PC-9 (cell line): ENCODE measurements at regions of chr18 and their contacts with region 1.

Region 1: GRCh38 chr18:7921938-7922587 is 354.9 kb downstream of the PTPRM start:
- DNase-seq: peak; percentile 41 to 88
- H3K4me3 ChIP-seq: peak overlapping the region; percentile 44; the same call in 1 of the 2 replicates
- H3K27ac ChIP-seq: peak overlapping the region; percentile 100
- H3K4me1 ChIP-seq: peaks cover 51% of the 10 kb centered on the region
- H3K27me3 ChIP-seq: no peaks in the 10 kb centered on the region
- CTCF ChIP-seq: no peak

Region 2: DNA sequence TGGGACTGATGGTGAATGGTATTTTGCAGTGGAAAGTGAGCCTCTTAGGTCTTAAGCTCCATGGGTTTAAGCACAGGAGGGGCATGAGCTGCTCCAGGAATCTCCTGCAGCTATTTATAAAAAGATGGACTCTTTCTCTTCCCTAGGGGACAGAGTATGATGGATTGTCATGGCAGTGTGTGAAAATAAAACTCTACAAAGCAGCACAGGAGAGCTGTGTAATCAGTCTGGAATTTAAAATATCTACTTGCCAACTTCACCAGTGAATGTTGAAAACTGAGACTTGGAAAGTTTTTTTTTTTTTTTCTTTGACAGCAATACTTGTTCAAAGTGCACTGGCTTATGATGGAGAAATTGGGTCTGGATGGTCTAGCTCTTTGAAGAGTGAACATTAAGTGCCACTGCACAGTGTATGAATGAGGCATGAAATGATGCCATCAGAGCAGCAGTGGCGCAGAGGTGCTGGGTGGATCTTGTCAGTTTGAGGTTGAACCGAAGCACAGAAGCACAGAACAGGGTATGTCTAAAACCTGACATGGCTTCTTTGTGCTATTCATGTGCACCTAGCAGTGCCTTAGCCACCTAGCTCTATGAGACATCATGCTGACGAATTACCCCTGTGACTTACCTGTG is 109.5 kb before region 1 on chr18:
- CTCF ChIA-PET with region 1: no interaction called
- POLR2A ChIA-PET with region 1: no interaction called
- intact Hi-C with region 1: loop called (anchors 1 kb)
- DNase-seq: peak; percentile 33 to 82
- H3K4me3 ChIP-seq: no peak overlapping the region
- H3K27ac ChIP-seq: peak overlapping the region; percentile 43
- H3K4me1 ChIP-seq: peaks cover 17% of the 10 kb centered on the region
- H3K27me3 ChIP-seq: no peaks in the 10 kb centered on the region
- CTCF ChIP-seq: no peak

Region 3: GRCh38 chr18:7878265-7879211 is 43.5 kb before region 1 on chr18:
- CTCF ChIA-PET with region 1: no interaction called
- POLR2A ChIA-PET with region 1: no interaction called
- intact Hi-C with region 1: loop called (anchors 5 kb)
- DNase-seq: peak in 1 of 2 experiments; percentile 81
- H3K4me3 ChIP-seq: no peak overlapping the region
- H3K27ac ChIP-seq: peak overlapping the region; percentile 86
- H3K4me1 ChIP-seq: peaks cover 39% of the 10 kb centered on the region
- H3K27me3 ChIP-seq: no peaks in the 10 kb centered on the region
- CTCF ChIP-seq: no peak